K562 (cell line): ENCODE measurements at regions of chr10 and their contacts with region 1.

Region 1: DNA sequence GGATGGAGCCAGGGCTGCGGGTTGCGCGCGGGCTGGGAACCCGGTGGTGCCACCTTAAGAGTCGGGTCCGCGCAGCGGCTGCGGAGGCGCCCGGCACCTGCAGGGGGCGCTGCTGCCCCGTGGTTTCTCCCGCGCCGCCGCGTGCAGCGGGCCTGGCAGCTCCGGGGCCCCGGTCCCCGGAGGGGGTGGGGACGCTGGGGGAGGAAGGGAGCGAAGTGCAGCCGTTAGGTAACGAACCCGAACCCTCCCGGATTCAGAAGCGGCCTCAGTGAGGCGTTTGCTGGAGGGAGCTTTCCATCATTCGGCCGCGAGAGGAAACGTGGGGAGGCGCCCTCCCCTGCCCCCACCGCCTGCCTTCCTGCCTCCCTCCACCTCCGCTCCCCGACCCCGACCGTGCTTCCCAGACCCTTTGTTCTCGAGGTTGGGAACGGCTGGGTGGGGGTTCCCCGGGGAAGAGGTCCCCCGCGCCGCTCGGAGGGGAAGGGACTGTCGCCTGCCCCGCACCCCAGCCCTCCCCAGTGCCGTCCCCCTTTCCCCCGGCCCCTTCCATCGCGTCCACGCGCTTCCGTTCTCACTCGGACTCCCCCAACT is 29.6 kb downstream of the SKIDA1 start:
- DNase-seq: peak; percentile 90 to 96 (median 96)
- ATAC-seq: peak; percentile 86
- H3K4me3 ChIP-seq: peak overlapping the region; percentile 71
- H3K27ac ChIP-seq: peak overlapping the region; percentile 85
- H3K4me1 ChIP-seq: peaks cover 0 to 42% of the 10 kb centered on the region in 2 experiments; a peak in 2 of 5 replicates
- H3K27me3 ChIP-seq: no peaks in the 10 kb centered on the region
- CTCF ChIP-seq: peak; percentile 92 to 94 (median 92)
- EP300 ChIP-seq: peak; percentile 67; the same call in 1 of the 2 replicates
- POLR2A ChIP-seq: peak; percentile 63; the same call in 1 of the 2 replicates
- RAD21 ChIP-seq: peak; percentile 96 to 98

Region 2: GRCh38 chr10:21278491-21279239 is 217.2 kb before region 1 on chr10:
- CTCF ChIA-PET with region 1: no interaction called
- POLR2A ChIA-PET with region 1: no interaction called
- in situ Hi-C with region 1: no loop called
- intact Hi-C with region 1: loop called (anchors 5 kb)
- DNase-seq: peak; percentile 77 to 92 (median 80)
- ATAC-seq: peak; percentile 99
- H3K4me3 ChIP-seq: no peak overlapping the region
- H3K27ac ChIP-seq: no peak overlapping the region
- H3K4me1 ChIP-seq: peaks cover 0 to 5% of the 10 kb centered on the region in 2 experiments; a peak in 2 of 5 replicates
- H3K27me3 ChIP-seq: no peaks in the 10 kb centered on the region
- CTCF ChIP-seq: peak; percentile 83 to 90 (median 88)
- EP300 ChIP-seq: no peak
- POLR2A ChIP-seq: no peak
- RAD21 ChIP-seq: peak; percentile 90 to 95

Region 3: GRCh38 chr10:21525367-21526183 is 29.7 kb after region 1 on chr10 and contains the start of gene SKIDA1:
- CTCF ChIA-PET with region 1: no interaction called
- POLR2A ChIA-PET with region 1: interaction called, 14 read pairs
- in situ Hi-C with region 1: no loop called
- intact Hi-C with region 1: loop called (anchors 5 kb)
- DNase-seq: peak; percentile 81 to 94 (median 86)
- ATAC-seq: peak; percentile 70
- H3K4me3 ChIP-seq: peak within 1 kb of the TSS; percentile 39
- H3K27ac ChIP-seq: peak within 1 kb of the TSS; percentile 92
- H3K4me1 ChIP-seq: peaks cover 15% of the 10 kb centered on the region in 2 experiments; a peak in 4 of 5 replicates
- H3K27me3 ChIP-seq: no peaks in the 10 kb centered on the region
- CTCF ChIP-seq: no peak
- EP300 ChIP-seq: peak; percentile 43
- POLR2A ChIP-seq: peak; percentile 87
- RAD21 ChIP-seq: no peak
- polyA plus RNA-seq, gene SKIDA1: 0.76 to 0.77 TPM

Region 4: DNA sequence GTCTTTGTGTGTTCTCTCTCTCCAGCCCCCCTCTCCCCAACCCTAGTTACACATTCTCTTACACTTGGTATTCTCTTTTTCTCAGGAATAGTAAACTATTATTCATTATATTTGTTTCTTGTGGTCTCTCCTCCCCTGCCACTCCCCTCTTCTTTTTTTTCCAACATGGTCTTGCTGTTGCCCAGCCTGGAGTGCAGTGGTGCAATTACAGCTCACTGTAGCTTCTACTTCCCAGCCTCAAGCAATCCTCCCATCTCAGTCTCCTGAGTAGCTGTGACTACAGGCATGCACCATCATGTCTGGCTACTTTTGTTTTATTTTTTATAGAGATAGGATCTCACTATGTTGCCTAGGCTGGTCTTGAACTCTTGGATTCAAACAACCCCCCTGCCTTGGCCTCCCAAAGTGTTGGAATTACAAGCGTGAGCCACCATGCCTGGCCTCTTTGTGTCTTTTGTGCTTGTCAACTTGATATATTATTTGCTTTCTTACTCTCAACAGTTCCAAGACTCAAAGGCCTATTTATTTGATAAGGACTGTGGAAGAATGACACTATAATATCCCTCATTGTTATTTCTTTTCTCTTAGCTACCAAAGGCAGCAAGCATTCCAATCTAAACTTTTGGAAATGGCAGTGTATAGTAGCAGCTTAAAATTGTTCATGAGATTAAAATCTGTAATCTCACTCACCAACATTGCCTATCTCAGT is 105.1 kb after region 1 on chr10:
- CTCF ChIA-PET with region 1: no interaction called
- POLR2A ChIA-PET with region 1: no interaction called
- in situ Hi-C with region 1: no loop called
- intact Hi-C with region 1: loop called (anchors 10 kb)
- DNase-seq: no peak
- ATAC-seq: peak; percentile 54
- H3K4me3 ChIP-seq: no peak overlapping the region
- H3K27ac ChIP-seq: no peak overlapping the region
- H3K4me1 ChIP-seq: 0 out of 5 replicates have a peak, but pooled peaks cover 0 to 3% of the 10 kb centered on the region in 2 experiments
- H3K27me3 ChIP-seq: no peaks in the 10 kb centered on the region
- CTCF ChIP-seq: no peak
- EP300 ChIP-seq: no peak
- POLR2A ChIP-seq: no peak
- RAD21 ChIP-seq: no peak

Region 5: DNA sequence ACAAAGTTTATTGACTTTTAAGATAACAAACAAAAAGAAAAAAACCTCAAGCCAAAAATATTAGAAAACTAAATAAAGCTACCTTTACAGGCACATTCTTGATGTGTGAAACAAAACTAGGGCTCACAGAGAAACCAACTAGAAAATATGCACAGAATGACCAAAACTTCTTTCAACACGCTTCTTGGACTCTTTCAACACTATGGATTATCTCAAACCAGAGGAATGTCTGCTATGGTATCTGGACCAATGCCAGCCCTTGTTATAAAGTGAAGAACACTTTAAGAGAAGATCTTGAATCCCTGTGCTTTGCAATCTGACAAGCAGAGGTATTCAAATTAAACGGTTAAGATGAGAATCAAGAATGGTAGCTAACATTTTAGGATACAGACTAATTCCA is 431.1 kb after region 1 on chr10:
- CTCF ChIA-PET with region 1: no interaction called
- POLR2A ChIA-PET with region 1: no interaction called
- in situ Hi-C with region 1: loop called (anchors 25 kb)
- intact Hi-C with region 1: no loop called
- DNase-seq: peak in 3 of 4 experiments; percentile 27 to 72 (median 42)
- ATAC-seq: peak; percentile 60
- H3K4me3 ChIP-seq: no peak overlapping the region
- H3K27ac ChIP-seq: no peak overlapping the region
- H3K4me1 ChIP-seq: peaks cover 0 to 20% of the 10 kb centered on the region in 2 experiments; a peak in 3 of 5 replicates
- H3K27me3 ChIP-seq: no peaks in the 10 kb centered on the region
- CTCF ChIP-seq: no peak
- EP300 ChIP-seq: no peak
- POLR2A ChIP-seq: no peak
- RAD21 ChIP-seq: no peak